ENCODE measurements at regions of chr6 and their contacts with region 1.

Region 1: GRCh38 chr6:97059473-97059872 is 134.9 kb downstream of the KLHL32 start:
- DNase-seq: peak in 2 of 4 donors; percentile 10 to 18
- ATAC-seq: peak; percentile 56
- H3K4me3 ChIP-seq: no peak overlapping the region
- H3K27ac ChIP-seq: no peak overlapping the region
- H3K4me1 ChIP-seq: no peaks in the 10 kb centered on the region
- H3K27me3 ChIP-seq: no peaks in the 10 kb centered on the region
- CTCF ChIP-seq: peak; percentile 34 to 49

Region 2: GRCh38 chr6:96542702-96543101 is 516.8 kb before region 1 on chr6:
- intact Hi-C with region 1: loop called in 1 of 2 experiments (anchors 10 kb)
- DNase-seq: no peak
- ATAC-seq: no peak
- H3K4me3 ChIP-seq: no peak overlapping the region
- H3K27ac ChIP-seq: no peak overlapping the region
- H3K4me1 ChIP-seq: no peaks in the 10 kb centered on the region
- H3K27me3 ChIP-seq: no peaks in the 10 kb centered on the region
- CTCF ChIP-seq: no peak

Region 3: GRCh38 chr6:96626759-96627364 is 432.6 kb before region 1 on chr6:
- intact Hi-C with region 1: loop called in 1 of 2 experiments (anchors 10 kb)
- DNase-seq: peak in 2 of 4 donors; percentile 11 to 26
- ATAC-seq: peak; percentile 75
- H3K4me3 ChIP-seq: no peak overlapping the region
- H3K27ac ChIP-seq: no peak overlapping the region
- H3K4me1 ChIP-seq: no peaks in the 10 kb centered on the region
- H3K27me3 ChIP-seq: no peaks in the 10 kb centered on the region
- CTCF ChIP-seq: peak in 1 of 2 donors; percentile 24

Region 4: DNA sequence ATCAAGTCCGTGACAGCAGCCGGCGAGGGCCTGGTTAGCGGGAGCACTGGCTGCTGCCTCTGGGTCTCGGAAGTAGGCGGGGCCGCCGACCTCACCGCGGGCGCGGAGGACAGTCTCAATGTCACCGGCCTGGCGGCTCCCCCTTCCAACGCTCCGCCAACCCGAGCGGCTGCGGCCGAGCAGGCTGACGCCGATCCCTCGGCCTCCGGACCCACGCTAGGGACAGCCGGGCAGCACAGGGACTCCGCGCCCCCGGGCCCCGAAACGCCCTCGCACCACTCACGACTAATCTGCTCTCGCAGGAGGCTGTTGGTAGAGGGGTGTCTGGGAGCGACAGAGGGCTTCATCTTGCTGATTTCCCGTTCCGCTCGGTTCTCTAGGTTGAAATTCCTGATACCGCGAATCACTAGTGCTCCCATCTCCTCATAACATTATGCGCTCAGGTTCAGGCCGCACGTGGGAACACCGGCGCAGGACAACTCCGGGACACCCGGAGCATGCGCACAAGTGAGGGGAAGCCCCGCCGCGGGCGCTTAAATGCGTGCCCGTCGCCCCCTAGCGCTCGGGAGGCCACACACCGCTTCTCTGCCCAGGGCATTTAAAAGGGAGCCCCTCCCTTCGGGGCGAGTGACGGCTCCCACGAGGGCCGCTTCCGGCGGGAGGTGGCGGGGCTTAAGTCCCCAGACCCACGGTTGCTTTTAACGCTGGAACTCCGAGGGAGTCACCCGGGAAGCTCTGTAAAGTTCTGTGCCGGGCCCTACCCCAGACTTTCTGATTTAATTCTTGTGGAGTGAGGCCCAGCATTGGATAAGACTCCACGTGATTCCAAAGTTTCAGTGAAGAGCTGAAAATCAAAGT is 161.9 kb before region 1 on chr6 and contains the start of gene NDUFAF4:
- intact Hi-C with region 1: loop called in 1 of 2 experiments (anchors 5 kb)
- DNase-seq: peak; percentile 94 to 99 (median 97)
- ATAC-seq: peak; percentile 99
- H3K4me3 ChIP-seq: peak within 1 kb of the TSS; percentile 80 to 96
- H3K27ac ChIP-seq: peak within 1 kb of the TSS; percentile 90 to 93
- H3K4me1 ChIP-seq: peaks cover 8 to 30% of the 10 kb centered on the region in 2 donors
- H3K27me3 ChIP-seq: no peaks in the 10 kb centered on the region
- CTCF ChIP-seq: peak; percentile 86 to 92
- polyA plus RNA-seq, gene NDUFAF4: 22.1 to 28.3 (median 25.5) TPM